Dendritic cell treated with granulocyte-macrophage colony-stimulating factor and Interleukin-4, amounts not matched to agents 40 ng/mL and 50 ng/mL, for 4 days (primary cell): ENCODE measurements at regions of chr2 and their contacts with region 1.

Region 1: DNA sequence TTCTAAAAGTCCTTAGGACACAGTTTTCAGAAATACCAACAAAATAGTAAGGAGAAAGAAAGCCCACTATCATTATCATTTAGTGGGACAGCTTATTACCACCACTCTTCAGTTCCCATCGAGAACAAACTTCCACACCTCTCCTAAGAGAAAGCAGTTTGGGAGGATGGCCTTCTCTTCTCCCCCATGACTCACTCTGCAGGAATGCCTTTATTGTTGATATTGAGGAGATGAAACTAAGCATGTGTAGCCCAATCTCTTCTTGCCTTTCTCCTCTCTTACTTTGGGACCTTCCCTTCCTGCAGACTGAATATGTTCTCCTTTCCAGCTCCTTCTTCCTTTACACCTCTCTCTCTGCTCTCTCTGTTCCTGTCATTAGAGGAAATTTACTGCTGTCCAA is 30.0 kb upstream of the ERMN start:
- H3K4me3 Mint-ChIP-seq: no peak overlapping the region
- H3K27ac Mint-ChIP-seq: no peak overlapping the region
- H3K4me1 Mint-ChIP-seq: no peaks in the 10 kb centered on the region
- H3K27me3 Mint-ChIP-seq: no peaks in the 10 kb centered on the region

Region 2: GRCh38 chr2:157404363-157404762 is 48.7 kb after region 1 on chr2:
- intact Hi-C with region 1: loop called (anchors 10 kb)
- H3K4me3 Mint-ChIP-seq: no peak overlapping the region
- H3K27ac Mint-ChIP-seq: no peak overlapping the region
- H3K4me1 Mint-ChIP-seq: no peaks in the 10 kb centered on the region
- H3K27me3 Mint-ChIP-seq: no peaks in the 10 kb centered on the region